WTC11 (cell line): ENCODE measurements at regions of chr13 and their contacts with region 1.

Region 1: GRCh38 chr13:60431108-60431700 is 34.2 kb downstream of the TDRD3 start:
- DNase-seq: no peak
- ATAC-seq: peak; percentile 80
- H3K4me3 Mint-ChIP-seq: no peak overlapping the region
- H3K27ac Mint-ChIP-seq: no peak overlapping the region
- H3K4me1 Mint-ChIP-seq: peaks cover 8% of the 10 kb centered on the region
- H3K27me3 Mint-ChIP-seq: no peaks in the 10 kb centered on the region
- CTCF ChIP-seq: peak; percentile 72

Region 2: DNA sequence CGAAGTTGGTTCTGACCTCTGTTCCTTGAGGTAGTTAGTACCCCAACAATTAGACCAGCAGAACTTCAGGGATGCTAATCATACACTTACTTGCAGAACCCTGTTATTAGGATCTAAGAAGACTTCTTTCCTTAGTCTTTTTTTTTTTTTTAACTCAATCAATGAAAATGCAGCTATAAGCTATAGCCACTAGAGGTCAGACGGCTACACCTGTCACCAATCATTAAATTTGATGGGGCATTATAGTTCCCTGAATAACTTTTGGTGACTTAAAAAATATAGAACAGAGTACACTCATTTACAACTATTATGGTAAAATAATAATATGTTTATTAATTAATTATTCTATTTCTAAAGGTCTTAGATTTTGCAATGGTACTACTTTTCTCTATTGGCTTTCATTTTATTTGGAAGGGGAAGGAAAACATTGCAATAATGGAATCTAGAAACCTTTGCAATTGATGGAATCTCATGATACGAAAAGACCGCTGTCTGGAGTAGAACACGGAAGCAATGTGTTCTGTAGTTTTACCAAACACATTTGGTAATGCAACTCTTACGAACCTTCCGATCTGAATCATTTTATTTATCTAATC is 750.7 kb before region 1 on chr13:
- CTCF ChIA-PET with region 1: interaction called, 12 read pairs
- POLR2A ChIA-PET with region 1: no interaction called
- DNase-seq: no peak
- ATAC-seq: no peak
- H3K4me3 Mint-ChIP-seq: no peak overlapping the region
- H3K27ac Mint-ChIP-seq: no peak overlapping the region
- H3K4me1 Mint-ChIP-seq: peaks cover 18% of the 10 kb centered on the region
- H3K27me3 Mint-ChIP-seq: no peaks in the 10 kb centered on the region
- CTCF ChIP-seq: peak; percentile 58

Region 3: GRCh38 chr13:60335531-60335930 is 95.7 kb before region 1 on chr13:
- CTCF ChIA-PET with region 1: interaction called, 12 read pairs
- POLR2A ChIA-PET with region 1: no interaction called
- DNase-seq: no peak
- ATAC-seq: no peak
- H3K4me3 Mint-ChIP-seq: no peak overlapping the region
- H3K27ac Mint-ChIP-seq: no peak overlapping the region
- H3K4me1 Mint-ChIP-seq: peaks cover 22% of the 10 kb centered on the region
- H3K27me3 Mint-ChIP-seq: no peaks in the 10 kb centered on the region
- CTCF ChIP-seq: peak; percentile 52; the same call in 1 of the 2 replicates

Region 4: DNA sequence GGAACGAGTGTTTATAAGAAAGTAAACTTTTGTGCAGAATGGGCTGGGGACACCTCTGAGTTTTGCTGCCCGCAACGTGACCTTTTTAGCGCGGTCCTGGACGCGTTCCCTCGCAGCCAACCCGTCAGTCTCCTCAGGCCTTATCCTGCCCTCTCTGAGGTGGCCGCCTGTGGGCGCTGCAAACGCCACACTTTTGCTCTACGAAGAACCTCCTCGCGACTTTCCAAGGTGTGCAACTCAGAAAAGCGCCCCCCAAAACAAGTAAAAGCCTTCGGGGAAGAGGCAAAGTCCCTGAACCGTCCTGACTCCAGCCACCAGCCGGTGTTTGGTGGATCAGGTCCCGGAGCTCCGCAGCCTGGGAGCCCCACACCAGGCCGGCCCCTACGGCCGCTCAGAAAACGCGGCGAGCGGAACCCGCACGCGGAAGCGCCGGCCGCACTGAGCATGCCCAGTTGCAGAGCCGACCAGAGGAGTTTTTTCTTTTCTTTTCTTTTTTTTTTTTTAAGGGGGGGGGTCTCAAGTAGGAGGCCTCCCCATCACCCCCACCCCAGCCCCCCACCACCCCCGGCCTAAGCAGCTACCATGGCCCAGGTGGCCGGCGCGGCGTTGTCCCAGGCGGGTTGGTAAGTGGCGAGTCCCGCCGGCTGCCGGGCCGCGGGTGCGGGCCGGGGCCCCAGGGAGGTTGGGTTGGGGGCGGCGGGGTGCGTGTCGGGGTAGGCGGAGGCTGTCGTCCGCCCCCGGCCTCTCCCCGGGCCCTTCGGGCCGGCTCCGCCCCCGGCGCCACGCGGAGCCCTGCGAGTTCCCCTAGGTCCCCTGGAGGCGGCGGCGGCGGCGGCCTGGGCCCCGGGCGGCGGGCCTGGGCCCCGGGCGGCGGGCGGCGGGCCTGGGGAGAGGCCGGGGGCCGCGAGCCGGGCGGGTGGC is 34.2 kb before region 1 on chr13 and contains the start of gene TDRD3:
- CTCF ChIA-PET with region 1: interaction called, 12 read pairs
- POLR2A ChIA-PET with region 1: no interaction called
- DNase-seq: peak; percentile 83
- ATAC-seq: peak; percentile 71
- H3K4me3 Mint-ChIP-seq: peak within 1 kb of the TSS; percentile 94
- H3K27ac Mint-ChIP-seq: peak within 1 kb of the TSS; percentile 97
- H3K4me1 Mint-ChIP-seq: peaks cover 49% of the 10 kb centered on the region
- H3K27me3 Mint-ChIP-seq: no peaks in the 10 kb centered on the region
- CTCF ChIP-seq: peak; percentile 47; the same call in 1 of the 2 replicates
- total RNA-seq, gene TDRD3: 16.1 to 19.5 TPM (median 16.9 TPM) in 3 replicates